CD4-positive, alpha-beta T cell (primary cell): ENCODE measurements at regions of chr19 and their contacts with region 1.

Region 1: DNA sequence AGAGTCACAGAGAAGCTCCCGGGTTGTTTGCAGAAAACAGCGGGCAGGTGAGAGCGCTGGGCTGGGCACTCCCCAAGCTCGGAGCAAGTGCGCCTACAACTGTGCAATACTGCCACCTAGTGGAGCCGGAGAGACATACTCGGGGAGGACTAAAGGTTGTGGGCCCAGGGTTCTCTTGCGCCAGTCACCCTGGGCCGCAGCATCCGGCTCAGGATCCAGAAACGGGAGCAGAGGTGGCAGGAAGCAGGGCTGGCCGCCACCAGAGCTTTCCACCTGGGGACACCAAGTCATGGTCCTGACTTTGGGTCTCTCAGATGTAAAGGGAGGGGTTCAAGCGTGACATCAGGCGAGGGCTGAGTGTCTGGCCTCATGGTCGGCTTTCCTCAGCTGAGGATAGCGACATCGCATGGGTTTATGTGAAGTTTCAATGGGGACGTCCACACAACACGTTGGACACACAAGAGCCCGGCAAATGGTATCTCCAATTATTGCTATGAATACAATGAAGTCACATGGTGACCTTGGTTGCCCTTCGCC is 11.2 kb upstream of the KLK4 start:
- DNase-seq: peak; percentile 53 to 87 (median 63)
- ATAC-seq: peak; percentile 93
- H3K4me3 ChIP-seq: no peak overlapping the region
- H3K4me3 Mint-ChIP-seq: no peak overlapping the region
- H3K27ac ChIP-seq: no peak overlapping the region
- H3K27ac Mint-ChIP-seq: no peak overlapping the region
- H3K4me1 ChIP-seq: peaks cover 7% of the 10 kb centered on the region
- H3K4me1 Mint-ChIP-seq: peaks cover 6% of the 10 kb centered on the region
- H3K27me3 ChIP-seq: peaks cover 7 to 21% of the 10 kb centered on the region in 2 experiments
- H3K27me3 Mint-ChIP-seq: peaks cover 50% of the 10 kb centered on the region
- CTCF ChIP-seq: peak; percentile 90

Region 2: GRCh38 chr19:50537762-50538230 is 384.6 kb before region 1 on chr19:
- CTCF ChIA-PET with region 1: no interaction called
- POLR2A ChIA-PET with region 1: no interaction called
- intact Hi-C with region 1: loop called (anchors 5 to 10 kb)
- DNase-seq: peak; percentile 35 to 76 (median 50)
- ATAC-seq: peak; percentile 41
- H3K4me3 ChIP-seq: no peak overlapping the region
- H3K4me3 Mint-ChIP-seq: no peak overlapping the region
- H3K27ac ChIP-seq: no peak overlapping the region
- H3K27ac Mint-ChIP-seq: no peak overlapping the region
- H3K4me1 ChIP-seq: no peaks in the 10 kb centered on the region
- H3K4me1 Mint-ChIP-seq: no peaks in the 10 kb centered on the region
- H3K27me3 ChIP-seq: peaks cover 3 to 4% of the 10 kb centered on the region in 2 experiments
- H3K27me3 Mint-ChIP-seq: peaks cover 19% of the 10 kb centered on the region
- CTCF ChIP-seq: peak; percentile 76

Region 3: DNA sequence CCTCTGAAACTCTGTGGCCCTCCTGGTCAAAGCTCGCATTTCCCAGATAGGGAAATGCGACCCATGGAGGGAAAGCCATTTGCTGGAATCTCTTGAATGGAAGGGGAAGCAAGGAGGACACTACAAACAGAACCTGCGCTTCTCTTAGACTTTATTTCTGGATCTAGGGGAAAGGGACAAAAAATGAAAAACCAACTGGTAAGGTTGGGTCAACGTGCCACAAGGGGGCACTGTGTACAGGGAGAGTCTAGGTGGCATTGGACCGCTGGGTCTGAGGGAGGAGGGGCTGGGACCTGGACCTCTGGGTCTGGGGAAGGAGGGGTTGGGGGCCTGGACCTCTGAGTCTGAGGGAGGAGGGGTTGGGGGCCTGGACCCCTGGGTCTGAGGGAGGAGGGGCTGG is 16.2 kb before region 1 on chr19:
- CTCF ChIA-PET with region 1: interaction called, 4 read pairs
- POLR2A ChIA-PET with region 1: no interaction called
- intact Hi-C with region 1: loop called in 1 of 2 experiments (anchors 2 kb)
- DNase-seq: peak in 8 of 14 experiments; percentile 7 to 35 (median 16)
- ATAC-seq: no peak
- H3K4me3 ChIP-seq: no peak overlapping the region
- H3K4me3 Mint-ChIP-seq: no peak overlapping the region
- H3K27ac ChIP-seq: no peak overlapping the region
- H3K27ac Mint-ChIP-seq: no peak overlapping the region
- H3K4me1 ChIP-seq: peaks cover 8% of the 10 kb centered on the region
- H3K4me1 Mint-ChIP-seq: peaks cover 8% of the 10 kb centered on the region
- H3K27me3 ChIP-seq: peaks cover 23 to 57% of the 10 kb centered on the region in 2 experiments
- H3K27me3 Mint-ChIP-seq: peaks cover 31% of the 10 kb centered on the region
- CTCF ChIP-seq: peak; percentile 25

Region 4: GRCh38 chr19:50969411-50969756 is 47.0 kb after region 1 on chr19 and contains the start of gene KLK6:
- CTCF ChIA-PET with region 1: no interaction called
- POLR2A ChIA-PET with region 1: no interaction called
- intact Hi-C with region 1: no loop called
- DNase-seq: no peak
- ATAC-seq: no peak
- H3K4me3 ChIP-seq: no peak within 1 kb of the TSS
- H3K4me3 Mint-ChIP-seq: no peak within 1 kb of the TSS
- H3K27ac ChIP-seq: no peak within 1 kb of the TSS
- H3K27ac Mint-ChIP-seq: no peak within 1 kb of the TSS
- H3K4me1 ChIP-seq: no peaks in the 10 kb centered on the region
- H3K4me1 Mint-ChIP-seq: no peaks in the 10 kb centered on the region
- H3K27me3 ChIP-seq: peaks cover 4 to 12% of the 10 kb centered on the region in 2 experiments
- H3K27me3 Mint-ChIP-seq: peaks cover 74% of the 10 kb centered on the region
- CTCF ChIP-seq: no peak
- total RNA-seq, gene KLK6: not detected

Region 5: GRCh38 chr19:51002542-51003171 is 80.3 kb after region 1 on chr19:
- CTCF ChIA-PET with region 1: no interaction called
- POLR2A ChIA-PET with region 1: no interaction called
- intact Hi-C with region 1: loop called in 1 of 2 experiments (anchors 2 kb)
- DNase-seq: peak in 1 of 14 experiments; percentile 38
- ATAC-seq: no peak
- H3K4me3 ChIP-seq: no peak overlapping the region
- H3K4me3 Mint-ChIP-seq: no peak overlapping the region
- H3K27ac ChIP-seq: no peak overlapping the region
- H3K27ac Mint-ChIP-seq: no peak overlapping the region
- H3K4me1 ChIP-seq: no peaks in the 10 kb centered on the region
- H3K4me1 Mint-ChIP-seq: no peaks in the 10 kb centered on the region
- H3K27me3 ChIP-seq: peaks cover 27 to 30% of the 10 kb centered on the region in 2 experiments
- H3K27me3 Mint-ChIP-seq: peaks cover 77% of the 10 kb centered on the region
- CTCF ChIP-seq: no peak

Region 6: GRCh38 chr19:51097166-51097738 is 174.9 kb after region 1 on chr19:
- CTCF ChIA-PET with region 1: no interaction called
- POLR2A ChIA-PET with region 1: no interaction called
- intact Hi-C with region 1: loop called in 1 of 2 experiments (anchors 5 kb)
- DNase-seq: peak; percentile 50 to 80 (median 65)
- ATAC-seq: peak; percentile 50
- H3K4me3 ChIP-seq: no peak overlapping the region
- H3K4me3 Mint-ChIP-seq: no peak overlapping the region
- H3K27ac ChIP-seq: no peak overlapping the region
- H3K27ac Mint-ChIP-seq: no peak overlapping the region
- H3K4me1 ChIP-seq: peaks cover 17% of the 10 kb centered on the region
- H3K4me1 Mint-ChIP-seq: peaks cover 23% of the 10 kb centered on the region
- H3K27me3 ChIP-seq: no peaks in the 10 kb centered on the region
- H3K27me3 Mint-ChIP-seq: no peaks in the 10 kb centered on the region
- CTCF ChIP-seq: peak; percentile 42